ENCODE measurements at regions of chr20 and their contacts with region 1.

Region 1: GRCh38 chr20:1657556-1658334 is at the start of gene SIRPG:
- DNase-seq: no peak
- H3K4me3 Mint-ChIP-seq: no peak within 1 kb of the TSS
- H3K27ac Mint-ChIP-seq: no peak within 1 kb of the TSS
- H3K4me1 Mint-ChIP-seq: no peaks in the 10 kb centered on the region
- H3K27me3 Mint-ChIP-seq: peaks cover 11% of the 10 kb centered on the region
- CTCF ChIP-seq: no peak
- total RNA-seq, gene SIRPG: not detected in 2 replicates

Region 2: GRCh38 chr20:1291191-1291741 is 366.5 kb before region 1 on chr20:
- CTCF ChIA-PET with region 1: no interaction called
- POLR2A ChIA-PET with region 1: no interaction called
- intact Hi-C with region 1: no loop called
- DNase-seq: peak; percentile 6
- H3K4me3 Mint-ChIP-seq: peak overlapping the region; percentile 12
- H3K27ac Mint-ChIP-seq: peak overlapping the region; percentile 39
- H3K4me1 Mint-ChIP-seq: peaks cover 18% of the 10 kb centered on the region
- H3K27me3 Mint-ChIP-seq: no peaks in the 10 kb centered on the region
- CTCF ChIP-seq: no peak

Region 3: GRCh38 chr20:1503564-1504227 is 154.0 kb before region 1 on chr20:
- CTCF ChIA-PET with region 1: no interaction called
- POLR2A ChIA-PET with region 1: no interaction called
- intact Hi-C with region 1: no loop called
- DNase-seq: peak; percentile 92
- H3K4me3 Mint-ChIP-seq: no peak overlapping the region
- H3K27ac Mint-ChIP-seq: peak overlapping the region; percentile 32
- H3K4me1 Mint-ChIP-seq: peaks cover 52% of the 10 kb centered on the region
- H3K27me3 Mint-ChIP-seq: no peaks in the 10 kb centered on the region
- CTCF ChIP-seq: peak; percentile 99

Region 4: DNA sequence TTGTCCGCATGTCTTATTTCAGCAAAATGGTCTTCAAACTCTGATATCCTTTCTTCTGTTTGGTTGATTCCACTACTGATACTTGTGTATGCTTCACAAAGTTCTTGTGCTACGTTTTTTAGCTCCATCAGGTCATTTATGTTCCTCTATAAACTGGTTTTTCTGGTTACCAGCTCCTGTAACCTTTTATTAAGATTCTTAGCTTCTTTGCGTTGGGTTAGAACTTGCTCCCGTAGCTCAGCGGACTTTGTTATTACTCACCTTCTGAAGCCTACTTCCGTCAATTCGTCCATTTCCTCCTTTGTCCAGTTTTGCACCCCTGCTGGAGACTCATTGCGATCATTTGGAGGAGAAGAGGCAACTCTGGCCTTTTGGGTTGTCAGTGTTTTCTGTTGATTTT is 14.5 kb before region 1 on chr20:
- CTCF ChIA-PET with region 1: interaction called, 3 read pairs
- POLR2A ChIA-PET with region 1: no interaction called
- intact Hi-C with region 1: loop called (anchors 2 kb)
- DNase-seq: no peak
- H3K4me3 Mint-ChIP-seq: no peak overlapping the region
- H3K27ac Mint-ChIP-seq: no peak overlapping the region
- H3K4me1 Mint-ChIP-seq: no peaks in the 10 kb centered on the region
- H3K27me3 Mint-ChIP-seq: no peaks in the 10 kb centered on the region
- CTCF ChIP-seq: no peak

Region 5: DNA sequence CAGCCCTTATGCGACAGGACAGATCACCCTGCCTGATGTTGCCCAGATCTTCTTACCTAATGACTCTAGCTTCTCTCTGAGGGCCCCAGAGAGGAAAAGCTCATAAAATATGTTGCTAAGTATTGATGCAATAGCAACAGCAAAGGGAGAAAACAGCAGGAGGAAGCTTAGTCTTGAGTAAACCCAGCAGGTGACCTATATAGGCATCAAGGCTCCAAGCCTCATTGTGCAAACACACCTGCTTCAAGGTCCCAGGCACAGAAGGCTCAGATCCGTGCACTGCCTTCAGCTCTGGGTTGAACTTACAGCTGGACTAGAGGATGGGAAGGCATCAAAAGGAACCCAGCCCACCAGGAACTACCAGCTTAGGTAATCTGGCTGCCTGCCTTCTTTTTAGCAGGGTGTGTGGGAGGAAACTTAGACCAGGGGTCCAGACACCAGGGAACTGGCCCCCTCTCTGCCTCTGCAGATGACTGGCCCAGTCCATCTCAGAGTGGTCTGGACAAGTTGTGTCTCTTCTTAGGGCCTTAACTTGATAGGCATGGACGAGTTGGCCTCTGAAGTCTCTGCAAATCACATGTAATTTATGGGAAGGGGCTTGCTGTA is 672.4 kb after region 1 on chr20:
- CTCF ChIA-PET with region 1: no interaction called
- POLR2A ChIA-PET with region 1: no interaction called
- intact Hi-C with region 1: no loop called
- DNase-seq: no peak
- H3K4me3 Mint-ChIP-seq: no peak overlapping the region
- H3K27ac Mint-ChIP-seq: no peak overlapping the region
- H3K4me1 Mint-ChIP-seq: no peaks in the 10 kb centered on the region
- H3K27me3 Mint-ChIP-seq: peaks cover 48% of the 10 kb centered on the region
- CTCF ChIP-seq: no peak

Measured in MCF 10A (cell line).